ENCODE measurements at regions of chr18 and their contacts with region 1.

Region 1: GRCh38 chr18:28189400-28190239 is 12.7 kb upstream of the CDH2 start:
- DNase-seq: peak; percentile 87
- ATAC-seq: peak; percentile 94
- H3K4me3 ChIP-seq: no peak overlapping the region
- H3K27ac ChIP-seq: no peak overlapping the region
- H3K4me1 ChIP-seq: no peaks in the 10 kb centered on the region
- H3K27me3 ChIP-seq: no peaks in the 10 kb centered on the region
- CTCF ChIP-seq: peak; percentile 91
- POLR2A ChIP-seq: no peak
- RAD21 ChIP-seq: peak; percentile 92

Region 2: DNA sequence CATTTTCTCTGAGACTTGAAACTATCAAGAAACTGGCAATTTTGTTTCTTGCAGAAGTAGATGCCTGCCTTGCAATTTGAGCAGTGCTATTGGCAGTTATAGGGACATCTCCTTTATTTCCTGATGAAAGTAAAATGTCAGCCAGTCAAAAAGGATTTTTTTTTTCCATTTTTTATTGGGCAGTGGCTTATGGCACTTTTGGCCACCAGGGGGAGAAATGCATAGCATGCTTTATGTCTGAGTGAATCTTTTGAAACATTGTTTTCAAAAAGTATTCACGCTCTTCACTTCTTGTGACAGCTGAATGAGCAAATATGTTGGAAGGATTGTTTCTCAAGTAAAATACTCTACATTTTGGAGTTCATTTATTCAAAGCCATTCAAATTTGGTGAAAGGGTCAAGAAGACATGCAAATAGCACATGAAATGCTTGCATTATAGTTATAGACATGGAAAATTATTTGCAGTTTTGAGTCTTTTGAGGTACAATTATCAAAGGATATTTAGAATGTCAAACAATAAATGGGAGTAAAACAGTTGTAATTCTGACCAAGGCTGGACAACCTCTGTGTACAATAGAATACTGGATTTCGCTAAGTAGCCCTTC is 503.7 kb before region 1 on chr18:
- CTCF ChIA-PET with region 1: interaction called, 4 read pairs
- POLR2A ChIA-PET with region 1: no interaction called
- dilution Hi-C with region 1: no loop called
- in situ Hi-C with region 1: loop called (anchors 10 kb)
- intact Hi-C with region 1: loop called (anchors 1 kb)
- DNase-seq: peak; percentile 39
- ATAC-seq: no peak; the same call in 1 of the 2 replicates
- H3K4me3 ChIP-seq: no peak overlapping the region
- H3K27ac ChIP-seq: no peak overlapping the region
- H3K4me1 ChIP-seq: no peaks in the 10 kb centered on the region
- H3K27me3 ChIP-seq: no peaks in the 10 kb centered on the region; the same call in 1 of the 2 replicates
- CTCF ChIP-seq: peak; percentile 84
- POLR2A ChIP-seq: no peak
- RAD21 ChIP-seq: peak; percentile 65

Region 3: DNA sequence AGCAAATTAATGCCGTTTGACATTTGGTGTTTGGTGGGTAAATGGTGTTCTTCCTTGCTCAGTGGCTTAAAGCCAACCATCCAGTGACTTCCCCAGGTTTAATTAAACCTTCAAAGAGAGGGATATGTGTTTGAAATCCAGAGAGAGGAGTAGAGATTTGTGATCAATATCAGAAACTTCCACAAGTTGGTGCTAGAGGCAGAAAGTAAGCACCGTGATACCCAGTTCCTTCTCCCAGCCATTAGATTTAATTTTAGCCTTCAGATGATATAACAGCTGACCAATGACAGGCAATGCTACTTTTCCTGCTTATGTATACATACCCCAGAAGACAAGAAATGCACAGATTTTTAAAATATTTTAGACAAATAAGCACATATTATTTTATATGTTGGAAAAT is 411.2 kb before region 1 on chr18:
- CTCF ChIA-PET with region 1: no interaction called
- POLR2A ChIA-PET with region 1: no interaction called
- dilution Hi-C with region 1: no loop called
- in situ Hi-C with region 1: no loop called
- intact Hi-C with region 1: loop called (anchors 1 kb)
- DNase-seq: peak; percentile 17
- ATAC-seq: no peak
- H3K4me3 ChIP-seq: no peak overlapping the region
- H3K27ac ChIP-seq: no peak overlapping the region
- H3K4me1 ChIP-seq: no peaks in the 10 kb centered on the region
- H3K27me3 ChIP-seq: no peaks in the 10 kb centered on the region; the same call in 1 of the 2 replicates
- CTCF ChIP-seq: peak; percentile 51
- POLR2A ChIP-seq: no peak
- RAD21 ChIP-seq: peak; percentile 62

Measured in IMR-90 (cell line).